Naive thymus-derived CD4-positive, alpha-beta T cell (primary cell): ENCODE measurements at regions of chr21 and their contacts with region 1.

Region 1: GRCh38 chr21:37366482-37367316 is at the start of gene DYRK1A:
- DNase-seq: peak; percentile 95 to 99 (median 99)
- ATAC-seq: peak; percentile 91
- H3K4me3 ChIP-seq: peak within 1 kb of the TSS; percentile 75
- H3K4me3 Mint-ChIP-seq: peak within 1 kb of the TSS; percentile 93 to 100 (median 100)
- H3K27ac ChIP-seq: peak within 1 kb of the TSS; percentile 99
- H3K27ac Mint-ChIP-seq: peak within 1 kb of the TSS; percentile 98 to 100 (median 100)
- H3K4me1 ChIP-seq: peaks cover 20 to 33% of the 10 kb centered on the region in 2 donors
- H3K4me1 Mint-ChIP-seq: peaks cover 34 to 53% (median 44%) of the 10 kb centered on the region in 7 donors
- H3K27me3 ChIP-seq: no peaks in the 10 kb centered on the region
- H3K27me3 Mint-ChIP-seq: peaks cover 0 to 5% (median 0%) of the 10 kb centered on the region in 5 donors
- total RNA-seq, gene DYRK1A: 86.0 to 142 (median 125) TPM

Region 2: DNA sequence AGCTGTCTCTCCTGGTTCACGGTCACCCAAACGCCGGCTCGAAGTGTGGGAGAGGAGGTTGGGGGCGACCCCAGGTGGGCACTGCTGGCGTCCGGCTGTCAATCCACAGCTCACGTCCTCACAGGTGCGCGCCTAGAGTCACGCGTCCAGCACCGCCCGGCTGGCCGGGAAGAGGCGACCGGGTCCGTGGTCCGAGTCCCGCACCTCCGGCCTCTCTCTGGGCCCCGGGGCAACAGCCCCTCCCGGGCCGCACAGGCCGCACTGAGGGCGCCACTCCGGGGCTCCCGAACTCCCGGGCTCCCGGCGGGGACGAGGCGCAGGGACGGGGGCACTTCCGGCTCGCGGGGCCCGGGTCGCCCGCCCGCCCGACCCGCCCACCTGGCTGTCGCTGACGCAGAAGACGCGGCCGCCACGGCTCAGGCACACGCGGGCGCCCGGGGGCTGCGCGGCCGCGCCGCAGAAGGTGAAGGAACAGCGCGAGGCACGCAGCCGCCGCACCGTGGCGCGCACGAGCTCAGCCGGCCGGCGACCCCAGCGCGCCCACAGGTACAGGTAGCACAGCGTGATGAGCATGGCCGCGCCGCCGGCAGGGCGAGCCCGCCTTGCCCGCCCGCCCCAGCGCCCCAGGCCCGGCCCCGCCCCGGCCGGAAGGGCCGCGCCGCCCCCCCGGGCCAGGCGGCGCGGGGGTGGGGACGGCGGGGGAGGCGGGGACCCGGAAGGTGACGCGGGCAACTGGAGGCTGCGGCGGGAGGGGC is 400.5 kb before region 1 on chr21 and contains the start of gene HLCS:
- CTCF ChIA-PET with region 1: no interaction called
- POLR2A ChIA-PET with region 1: no interaction called
- intact Hi-C with region 1: loop called in 1 of 2 experiments (anchors 10 kb)
- DNase-seq: peak; percentile 62 to 79 (median 72)
- ATAC-seq: peak; percentile 93
- H3K4me3 ChIP-seq: peak within 1 kb of the TSS; percentile 52
- H3K4me3 Mint-ChIP-seq: peak within 1 kb of the TSS; percentile 80 to 91 (median 85)
- H3K27ac ChIP-seq: peak within 1 kb of the TSS; percentile 75
- H3K27ac Mint-ChIP-seq: peak within 1 kb of the TSS; percentile 77 to 92 (median 91)
- H3K4me1 ChIP-seq: peaks cover 0 to 6% of the 10 kb centered on the region in 2 donors
- H3K4me1 Mint-ChIP-seq: peaks cover 8 to 25% (median 12%) of the 10 kb centered on the region in 7 donors
- H3K27me3 ChIP-seq: no peaks in the 10 kb centered on the region
- H3K27me3 Mint-ChIP-seq: no peaks in the 10 kb centered on the region
- total RNA-seq, gene HLCS: 8.8 to 19.3 (median 12.2) TPM

Region 3: GRCh38 chr21:37166733-37167132 is 200.0 kb before region 1 on chr21:
- CTCF ChIA-PET with region 1: no interaction called
- POLR2A ChIA-PET with region 1: no interaction called
- intact Hi-C with region 1: loop called in 1 of 2 experiments (anchors 1 kb)
- DNase-seq: peak in 3 of 9 donors; percentile 2 to 8 (median 5)
- ATAC-seq: no peak
- H3K4me3 ChIP-seq: no peak overlapping the region
- H3K4me3 Mint-ChIP-seq: no peak overlapping the region
- H3K27ac ChIP-seq: no peak overlapping the region
- H3K27ac Mint-ChIP-seq: peak overlapping the region in 2 of 9 donors; percentile 67 to 88
- H3K4me1 ChIP-seq: no peaks in the 10 kb centered on the region
- H3K4me1 Mint-ChIP-seq: peaks cover 0 to 12% (median 3%) of the 10 kb centered on the region in 7 donors
- H3K27me3 ChIP-seq: no peaks in the 10 kb centered on the region
- H3K27me3 Mint-ChIP-seq: no peaks in the 10 kb centered on the region

Region 4: DNA sequence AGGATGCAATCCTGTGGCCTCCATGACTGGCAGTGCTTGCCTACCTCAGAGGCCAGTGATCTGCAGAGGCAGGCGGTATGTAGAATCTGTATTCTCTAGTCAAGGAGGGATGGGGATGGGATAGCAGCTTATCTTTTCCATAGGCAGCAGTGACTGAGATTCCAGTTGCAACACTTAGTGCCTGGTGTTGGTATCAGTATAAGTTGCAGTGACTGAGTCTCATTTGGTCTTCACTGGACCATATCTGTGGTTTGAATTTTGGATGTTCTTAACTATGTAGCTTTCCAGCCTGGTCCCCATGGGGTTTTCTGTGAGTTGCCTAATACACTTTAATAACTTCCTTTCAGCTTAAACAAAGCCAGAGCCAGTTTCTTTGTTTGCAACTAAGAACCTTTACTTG is 16.4 kb after region 1 on chr21:
- CTCF ChIA-PET with region 1: interaction called, 4 read pairs
- POLR2A ChIA-PET with region 1: interaction called, 7 read pairs
- intact Hi-C with region 1: loop called (anchors 1 kb)
- DNase-seq: no peak
- ATAC-seq: no peak
- H3K4me3 ChIP-seq: no peak overlapping the region
- H3K4me3 Mint-ChIP-seq: peak overlapping the region in 7 of 10 donors; percentile 18 to 71 (median 57)
- H3K27ac ChIP-seq: no peak overlapping the region
- H3K27ac Mint-ChIP-seq: peak overlapping the region in 5 of 9 donors; percentile 58 to 81 (median 71)
- H3K4me1 ChIP-seq: peaks cover 70 to 73% of the 10 kb centered on the region in 2 donors
- H3K4me1 Mint-ChIP-seq: peaks cover 72 to 99% (median 95%) of the 10 kb centered on the region in 7 donors
- H3K27me3 ChIP-seq: no peaks in the 10 kb centered on the region
- H3K27me3 Mint-ChIP-seq: no peaks in the 10 kb centered on the region

Region 5: GRCh38 chr21:37435120-37435519 is 68.4 kb after region 1 on chr21:
- CTCF ChIA-PET with region 1: no interaction called
- POLR2A ChIA-PET with region 1: interaction called, 3 read pairs
- intact Hi-C with region 1: loop called (anchors 1 to 2 kb)
- DNase-seq: peak in 7 of 9 donors; percentile 58 to 85 (median 78)
- ATAC-seq: peak; percentile 99
- H3K4me3 ChIP-seq: no peak overlapping the region
- H3K4me3 Mint-ChIP-seq: no peak overlapping the region
- H3K27ac ChIP-seq: peak overlapping the region; percentile 4
- H3K27ac Mint-ChIP-seq: no peak overlapping the region
- H3K4me1 ChIP-seq: peaks cover 28 to 49% of the 10 kb centered on the region in 2 donors
- H3K4me1 Mint-ChIP-seq: peaks cover 39 to 61% (median 41%) of the 10 kb centered on the region in 7 donors
- H3K27me3 ChIP-seq: no peaks in the 10 kb centered on the region
- H3K27me3 Mint-ChIP-seq: no peaks in the 10 kb centered on the region